ENCODE measurements at regions of chr22 and their contacts with region 1.

Region 1: DNA sequence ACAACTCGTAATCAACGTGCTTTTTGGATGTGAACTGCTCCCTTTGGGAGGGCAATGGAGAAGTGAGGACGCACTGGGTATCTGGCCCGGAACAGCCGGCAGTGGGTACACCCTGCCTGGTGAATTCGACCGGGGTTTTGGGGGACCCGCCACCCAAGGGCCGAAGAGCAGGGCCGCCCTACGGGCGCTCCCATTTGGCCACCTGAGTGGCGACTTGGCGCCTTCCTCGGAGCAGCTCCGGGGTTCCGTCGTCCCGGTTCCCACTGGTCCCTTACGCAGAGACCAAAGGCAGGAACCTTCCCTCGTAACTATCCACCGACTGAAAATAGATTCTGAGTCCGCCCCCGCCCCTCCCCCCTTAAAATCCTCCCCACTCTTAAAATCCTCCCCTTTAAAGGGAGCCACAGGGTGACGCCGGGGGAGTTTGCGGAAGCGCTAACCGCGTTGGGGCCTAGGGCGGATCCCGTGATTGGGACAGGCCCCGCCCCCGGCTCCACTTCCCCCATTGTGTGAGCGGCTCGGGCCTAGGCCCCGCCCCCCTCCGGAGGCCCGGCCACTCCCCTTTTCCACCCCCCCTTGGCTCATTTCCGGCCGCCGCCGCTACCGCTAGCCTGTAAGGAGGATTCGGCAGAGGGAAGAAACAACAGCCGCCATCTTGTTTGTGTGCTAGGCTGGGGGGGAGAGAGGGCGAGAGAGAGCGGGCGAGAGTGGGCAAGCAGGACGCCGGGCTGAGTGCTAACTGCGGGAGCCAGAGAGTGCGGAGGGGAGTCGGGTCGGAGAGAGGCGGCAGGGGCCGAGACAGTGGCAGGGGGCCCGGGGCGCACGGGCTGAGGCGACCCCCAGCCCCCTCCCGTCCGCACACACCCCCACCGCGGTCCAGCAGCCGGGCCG is 1.0 kb upstream of the EP300 start:
- DNase-seq: peak; percentile 100
- H3K4me3 ChIP-seq: peak overlapping the region; percentile 96 to 100 (median 100)
- H3K27ac ChIP-seq: peak overlapping the region; percentile 100
- H3K4me1 ChIP-seq: peaks cover 31 to 39% (median 34%) of the 10 kb centered on the region in 4 donors
- H3K27me3 ChIP-seq: no peaks in the 10 kb centered on the region
- CTCF ChIP-seq: no peak
- EP300 ChIP-seq: no peak
- POLR2A ChIP-seq: peak; percentile 79

Region 2: DNA sequence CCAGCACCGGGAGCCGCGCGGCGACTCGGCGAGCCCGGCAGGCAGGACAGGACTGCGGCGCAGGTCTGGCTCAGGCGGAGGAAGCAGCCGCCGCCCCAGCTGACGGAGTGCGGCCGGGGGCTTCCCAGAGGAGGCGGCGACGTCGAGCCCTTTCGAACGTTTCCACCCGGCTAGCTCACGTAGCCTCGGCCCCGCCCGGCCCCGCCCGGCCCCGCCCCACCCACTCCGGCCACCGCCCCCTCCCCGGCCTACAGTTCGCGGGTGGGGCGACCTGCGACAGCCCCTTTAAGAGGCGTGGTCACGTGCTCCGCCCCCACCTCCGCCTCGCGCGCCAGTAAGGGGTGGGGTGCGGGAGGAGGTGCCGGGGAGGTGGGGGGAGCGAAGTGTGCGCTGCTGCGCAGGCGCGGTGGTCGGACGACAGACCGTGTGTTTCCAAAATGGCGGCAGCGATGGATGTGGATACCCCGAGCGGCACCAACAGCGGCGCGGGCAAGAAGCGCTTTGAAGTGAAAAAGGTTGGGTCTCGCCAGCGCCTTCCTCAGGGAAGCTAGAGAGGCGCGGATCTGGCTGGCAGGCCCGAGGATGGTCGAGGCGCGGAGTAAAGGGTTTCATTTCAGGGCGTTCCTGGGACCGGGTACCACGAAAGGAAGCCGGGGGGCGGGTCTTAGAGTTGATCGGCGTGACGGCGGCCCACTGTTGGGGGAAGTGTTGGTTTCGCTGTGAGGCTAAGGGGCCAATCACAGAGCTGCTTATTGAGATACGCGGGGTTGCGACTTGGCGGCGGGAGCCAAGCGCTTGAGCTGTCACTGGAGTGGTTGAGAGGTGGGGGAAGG is 140.2 kb before region 1 on chr22 and contains the start of gene RBX1:
- intact Hi-C with region 1: loop called (anchors 1 kb)
- DNase-seq: peak; percentile 100
- H3K4me3 ChIP-seq: peak within 1 kb of the TSS; percentile 71 to 91 (median 86)
- H3K27ac ChIP-seq: peak within 1 kb of the TSS; percentile 90 to 98 (median 96)
- H3K4me1 ChIP-seq: peaks cover 31 to 45% (median 40%) of the 10 kb centered on the region in 4 donors
- H3K27me3 ChIP-seq: no peaks in the 10 kb centered on the region
- CTCF ChIP-seq: peak in 1 of 3 experiments; percentile 12
- EP300 ChIP-seq: no peak
- POLR2A ChIP-seq: peak; percentile 51
- total RNA-seq, gene RBX1: 35.6 to 44.4 (median 39.6) TPM

Region 3: DNA sequence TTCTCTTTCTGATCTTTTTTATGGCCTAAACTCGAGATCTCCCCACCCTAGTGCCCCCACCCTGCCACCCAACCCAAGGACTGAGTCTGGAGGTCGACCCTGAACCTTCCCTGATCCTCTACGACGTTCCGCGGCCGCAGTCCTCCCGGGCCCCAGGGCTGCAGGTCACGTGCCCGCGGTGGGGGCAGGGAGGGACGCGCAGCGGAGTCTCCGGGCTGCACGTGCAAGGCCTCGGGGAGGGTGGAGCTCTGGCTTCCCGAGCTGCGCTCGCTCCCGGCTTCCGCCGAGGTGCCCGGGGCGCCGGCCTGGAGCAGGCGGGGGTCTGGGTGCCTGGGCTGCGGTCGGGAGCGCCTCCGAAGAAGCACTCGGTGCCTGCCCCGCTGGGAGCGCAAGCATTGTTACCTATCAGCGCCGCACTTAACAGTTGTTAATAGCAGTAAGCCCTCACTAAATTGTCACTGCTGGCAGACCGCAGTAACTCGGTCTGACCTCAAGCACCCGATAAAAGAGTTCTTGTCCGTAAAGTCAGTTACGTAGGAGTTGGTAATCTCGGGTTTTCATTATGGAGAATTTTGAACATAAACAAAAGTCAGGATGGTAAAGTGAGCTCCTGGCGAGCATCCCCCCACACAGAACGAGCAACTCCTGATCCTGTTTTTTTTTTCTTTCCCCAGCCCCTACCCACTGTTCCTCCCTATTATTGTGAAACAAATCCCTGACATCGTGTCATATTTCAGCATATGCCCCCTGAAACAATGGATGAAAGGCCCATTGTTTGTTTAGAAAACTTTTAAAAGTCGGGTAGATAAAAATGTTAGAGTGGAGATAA is 68.7 kb before region 1 on chr22:
- intact Hi-C with region 1: loop called (anchors 1 kb)
- DNase-seq: peak; percentile 97
- H3K4me3 ChIP-seq: peak overlapping the region; percentile 70 to 88 (median 77)
- H3K27ac ChIP-seq: peak overlapping the region; percentile 97 to 99 (median 98)
- H3K4me1 ChIP-seq: peaks cover 10 to 21% (median 20%) of the 10 kb centered on the region in 4 donors
- H3K27me3 ChIP-seq: no peaks in the 10 kb centered on the region
- CTCF ChIP-seq: no peak
- EP300 ChIP-seq: no peak
- POLR2A ChIP-seq: peak; percentile 76